H1 (cell line): ENCODE measurements at regions of chr19 and their contacts with region 1.

Region 1: DNA sequence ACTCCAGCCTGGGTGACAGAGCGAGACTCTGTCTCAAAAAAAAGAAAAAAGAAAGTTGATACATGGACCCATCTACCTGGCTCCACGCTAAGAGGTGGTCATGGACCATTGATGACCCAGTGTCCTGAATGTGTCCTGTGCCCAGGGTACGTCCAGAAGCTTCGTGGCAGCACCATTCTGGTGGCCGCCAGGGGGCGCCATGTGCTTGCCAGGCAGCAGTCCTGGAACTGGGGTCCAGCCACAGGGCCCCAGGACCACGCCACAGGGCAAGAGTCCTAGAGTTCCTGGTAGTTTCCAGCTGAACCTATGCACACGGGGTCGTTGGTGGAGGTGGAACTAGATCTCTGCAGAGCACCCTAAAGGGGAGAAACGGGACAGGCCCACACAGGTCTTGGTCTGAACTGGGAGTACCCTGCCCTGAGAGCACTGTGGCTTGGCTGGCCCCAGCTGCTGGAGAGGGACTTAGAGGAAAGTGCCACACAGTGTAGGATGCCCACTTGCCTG is 19.9 kb upstream of the FBXO27 start:
- DNase-seq: peak; percentile 68 to 95
- H3K4me3 ChIP-seq: no peak overlapping the region
- H3K27ac ChIP-seq: no peak overlapping the region
- H3K4me1 ChIP-seq: no peaks in the 10 kb centered on the region
- H3K27me3 ChIP-seq: no peaks in the 10 kb centered on the region
- CTCF ChIP-seq: peak; percentile 83 to 91 (median 90)
- EP300 ChIP-seq: no peak
- POLR2A ChIP-seq: no peak
- RAD21 ChIP-seq: peak; percentile 76 to 84

Region 2: DNA sequence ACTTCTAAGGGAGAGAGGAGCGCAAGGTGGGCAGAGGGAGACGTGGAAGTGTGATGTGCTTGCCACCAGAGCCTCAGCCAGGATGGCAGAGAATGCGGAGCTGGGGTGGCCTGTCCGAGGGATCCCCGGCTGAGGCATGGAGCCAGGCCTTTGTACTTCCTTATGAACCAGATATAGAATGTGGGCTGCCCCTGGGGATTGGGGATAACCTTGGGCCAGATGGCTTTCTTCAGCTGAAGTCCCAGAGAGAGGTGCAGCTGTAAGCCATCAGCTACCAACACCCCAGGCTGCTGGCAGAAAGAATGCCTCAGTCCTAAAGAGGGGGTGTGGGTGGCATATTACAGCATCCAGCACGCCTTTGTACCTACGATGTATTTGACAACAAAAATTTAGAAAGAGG is 51.3 kb before region 1 on chr19:
- CTCF ChIA-PET with region 1: no interaction called
- POLR2A ChIA-PET with region 1: no interaction called
- DNase-seq: no peak
- H3K4me3 ChIP-seq: no peak overlapping the region
- H3K27ac ChIP-seq: no peak overlapping the region
- H3K4me1 ChIP-seq: no peaks in the 10 kb centered on the region
- H3K27me3 ChIP-seq: no peaks in the 10 kb centered on the region
- CTCF ChIP-seq: no peak
- EP300 ChIP-seq: no peak
- POLR2A ChIP-seq: no peak
- RAD21 ChIP-seq: no peak

Region 3: DNA sequence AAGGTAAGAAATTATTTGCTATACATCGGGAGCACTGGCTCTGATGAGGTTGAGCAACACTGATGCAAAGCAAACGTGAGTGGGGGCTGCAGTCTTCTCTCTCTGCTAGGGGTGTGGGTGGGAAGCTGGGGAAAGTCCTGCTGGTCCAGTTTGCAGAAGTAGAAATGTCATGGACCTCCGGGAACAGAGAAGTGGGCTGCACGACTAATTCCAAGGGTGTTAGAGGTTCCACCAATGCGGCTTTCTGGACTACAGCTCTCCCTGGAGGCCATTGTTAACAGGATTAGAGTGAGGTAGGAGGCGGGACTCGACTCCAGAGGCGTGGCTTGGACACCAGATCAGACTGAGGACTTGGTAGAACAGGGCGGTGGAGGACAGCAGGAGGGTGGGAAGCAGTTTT is 14.2 kb before region 1 on chr19:
- CTCF ChIA-PET with region 1: interaction called, 23 read pairs
- POLR2A ChIA-PET with region 1: interaction called, 3 read pairs
- DNase-seq: peak in 1 of 2 experiments; percentile 67
- H3K4me3 ChIP-seq: no peak overlapping the region
- H3K27ac ChIP-seq: no peak overlapping the region
- H3K4me1 ChIP-seq: no peaks in the 10 kb centered on the region
- H3K27me3 ChIP-seq: 0 out of 7 replicates have a peak, but pooled peaks cover 0 to 2% (median 0%) of the 10 kb centered on the region in 4 experiments
- CTCF ChIP-seq: peak in 2 of 3 experiments; percentile 14 to 27; a peak in 2 of 4 replicates
- EP300 ChIP-seq: no peak
- POLR2A ChIP-seq: no peak
- RAD21 ChIP-seq: peak; percentile 31 to 46; a peak in 3 of 4 replicates

Region 4: GRCh38 chr19:39074205-39074692 is 22.0 kb after region 1 on chr19:
- CTCF ChIA-PET with region 1: interaction called, 21 read pairs
- POLR2A ChIA-PET with region 1: no interaction called
- DNase-seq: no peak
- H3K4me3 ChIP-seq: no peak overlapping the region
- H3K27ac ChIP-seq: no peak overlapping the region
- H3K4me1 ChIP-seq: no peaks in the 10 kb centered on the region
- H3K27me3 ChIP-seq: no peaks in the 10 kb centered on the region
- CTCF ChIP-seq: no peak
- EP300 ChIP-seq: no peak
- POLR2A ChIP-seq: no peak
- RAD21 ChIP-seq: no peak